ENCODE measurements at regions of chr16 and their contacts with region 1.

Region 1: DNA sequence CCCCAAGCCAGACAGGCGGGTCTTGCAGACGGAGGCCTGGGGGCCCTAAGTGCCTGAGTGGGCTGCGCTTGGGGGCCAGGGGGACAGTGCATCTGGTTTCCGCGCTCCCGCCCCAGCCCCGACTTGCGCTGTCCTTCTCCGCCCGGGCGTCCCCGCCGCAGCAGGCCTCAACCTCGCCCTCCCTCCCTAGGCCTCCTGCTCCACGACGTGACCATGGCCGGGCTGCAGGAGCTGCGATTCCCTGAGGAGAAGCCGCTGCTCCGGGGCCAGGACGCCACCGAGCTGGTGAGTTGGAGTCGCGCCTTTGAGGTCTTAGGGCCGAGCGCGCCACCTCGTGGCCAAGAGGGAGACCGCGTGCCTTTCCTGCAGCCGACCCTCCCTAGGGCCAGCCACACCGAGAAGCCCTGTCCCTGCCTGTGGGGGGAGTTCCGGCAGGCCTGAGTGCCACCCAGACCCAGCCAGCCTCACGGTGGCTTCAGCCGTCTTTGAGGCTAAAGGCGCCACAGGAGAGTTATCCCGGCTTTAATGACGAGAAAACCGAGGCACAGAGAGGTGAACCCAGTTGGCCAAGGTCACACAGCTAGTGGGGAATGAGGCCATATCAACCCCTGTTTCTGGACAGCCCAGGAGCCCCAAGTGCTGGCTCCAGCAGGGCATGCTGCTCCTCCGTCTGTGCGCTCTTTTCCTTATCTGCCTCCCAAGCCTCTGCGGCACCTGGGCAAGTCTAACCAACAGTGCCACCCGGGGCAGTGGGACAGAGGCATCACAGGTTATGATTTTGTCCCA is 12.2 kb upstream of the NDRG4 start:
- DNase-seq: peak; percentile 90
- ATAC-seq: peak; percentile 85 to 89

Region 2: GRCh38 chr16:58176608-58177352 is 311.0 kb before region 1 on chr16:
- intact Hi-C with region 1: no loop called
- DNase-seq: no peak
- ATAC-seq: no peak

Region 3: GRCh38 chr16:58264961-58265479 is 222.7 kb before region 1 on chr16:
- intact Hi-C with region 1: no loop called
- DNase-seq: no peak
- ATAC-seq: peak in 1 of 2 donors; percentile 47

Region 4: GRCh38 chr16:58392215-58393137 is 95.3 kb before region 1 on chr16 and contains the start of gene GINS3:
- intact Hi-C with region 1: loop called in 1 of 2 experiments (anchors 10 kb)
- DNase-seq: peak; percentile 92
- ATAC-seq: peak; percentile 97 to 99
- total RNA-seq, gene GINS3: 5.0 to 5.6 TPM

Region 5: DNA sequence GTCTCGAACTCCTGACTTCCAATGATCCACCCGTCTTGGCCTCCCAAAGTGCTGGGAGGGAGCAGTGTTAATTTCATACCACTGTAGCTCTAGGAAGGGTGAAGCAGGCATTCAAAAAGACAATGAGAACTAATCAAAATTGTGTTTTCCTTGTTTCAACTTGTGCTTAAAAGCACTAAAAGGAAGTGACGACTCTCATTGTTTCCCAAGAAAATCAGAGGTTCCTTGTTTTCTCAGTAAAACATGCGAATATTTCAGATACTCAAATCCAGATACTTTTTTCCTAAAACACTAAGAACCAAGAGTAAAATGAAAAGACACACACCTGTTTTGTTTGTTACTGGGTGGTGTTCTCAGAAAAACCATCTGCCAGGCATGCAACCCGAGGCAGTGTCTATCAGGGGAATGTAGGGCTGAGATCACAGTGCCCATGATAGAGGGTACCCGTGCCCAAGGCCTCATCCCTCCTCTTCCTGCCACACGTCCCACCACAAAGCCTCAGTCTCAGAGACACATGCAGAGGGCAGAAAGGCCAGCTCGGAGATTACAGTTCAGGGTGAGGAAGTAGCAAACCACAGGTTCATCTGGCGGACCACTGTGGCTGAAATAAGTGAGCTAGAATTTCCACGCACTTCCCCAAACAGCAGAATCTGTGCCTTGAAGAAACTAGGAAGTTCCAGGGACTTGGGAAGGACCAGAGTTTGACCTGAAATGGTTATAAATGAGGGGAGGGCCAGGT is 61.8 kb before region 1 on chr16:
- intact Hi-C with region 1: no loop called
- DNase-seq: no peak
- ATAC-seq: peak; percentile 14 to 63

Region 6: DNA sequence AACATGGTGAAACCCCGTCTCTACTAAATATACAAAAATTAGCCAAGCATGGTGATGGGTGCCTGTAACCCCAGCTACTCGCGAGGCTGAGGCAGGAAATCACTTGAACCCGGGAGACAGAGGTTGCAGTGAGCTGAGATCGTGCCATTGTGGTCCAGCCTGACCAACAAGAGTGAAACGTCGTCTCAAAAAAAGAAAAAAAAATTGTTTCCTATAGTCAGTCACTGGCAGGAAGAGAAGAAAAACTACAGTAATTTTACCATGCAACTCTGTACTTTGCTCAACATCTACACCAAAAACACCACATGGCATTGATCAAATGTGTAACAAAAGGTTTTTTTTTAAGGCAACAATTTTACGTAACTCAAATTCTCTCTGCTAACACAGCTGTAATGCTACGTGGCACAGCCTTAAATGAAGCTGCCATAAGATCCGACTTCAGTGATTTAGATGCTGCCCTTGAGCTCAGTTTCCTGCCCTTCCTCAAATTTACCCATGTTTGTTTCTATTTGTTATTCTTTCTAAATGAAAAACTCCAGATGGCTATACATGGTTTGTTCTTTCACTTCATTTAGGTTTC is 101.7 kb after region 1 on chr16:
- intact Hi-C with region 1: no loop called
- DNase-seq: no peak
- ATAC-seq: no peak